ENCODE measurements at regions of chr3 and their contacts with region 1.

Region 1: GRCh38 chr3:32510075-32510724 is 7.5 kb upstream of the CMTM6 start:
- DNase-seq: no peak

Region 2: DNA sequence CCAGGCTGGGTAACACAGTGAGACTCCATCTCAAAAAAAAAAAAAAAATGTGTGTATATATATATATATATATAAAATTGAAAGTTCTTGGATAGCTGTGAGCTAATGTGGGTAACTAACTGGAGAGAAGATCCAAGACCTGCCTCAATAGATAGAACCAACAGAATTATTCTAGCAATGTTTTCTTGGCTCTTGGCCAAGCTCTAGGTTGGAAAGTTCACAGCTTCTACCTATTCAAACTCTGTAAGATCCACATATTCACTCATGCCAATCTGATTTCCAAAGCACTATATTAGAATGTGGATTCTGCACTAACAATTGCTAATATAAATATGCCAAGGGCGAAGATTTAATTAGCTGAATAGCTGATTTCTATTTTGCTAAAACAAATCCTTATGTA is 22.2 kb after region 1 on chr3:
- intact Hi-C with region 1: loop called in 1 of 2 experiments (anchors 1 kb)
- DNase-seq: no peak

Region 3: GRCh38 chr3:32667122-32667521 is 156.9 kb after region 1 on chr3:
- intact Hi-C with region 1: loop called in 1 of 2 experiments (anchors 10 kb)
- DNase-seq: no peak